CD4-positive, alpha-beta memory T cell (primary cell): ENCODE measurements at regions of chr2 and their contacts with region 1.

Region 1: DNA sequence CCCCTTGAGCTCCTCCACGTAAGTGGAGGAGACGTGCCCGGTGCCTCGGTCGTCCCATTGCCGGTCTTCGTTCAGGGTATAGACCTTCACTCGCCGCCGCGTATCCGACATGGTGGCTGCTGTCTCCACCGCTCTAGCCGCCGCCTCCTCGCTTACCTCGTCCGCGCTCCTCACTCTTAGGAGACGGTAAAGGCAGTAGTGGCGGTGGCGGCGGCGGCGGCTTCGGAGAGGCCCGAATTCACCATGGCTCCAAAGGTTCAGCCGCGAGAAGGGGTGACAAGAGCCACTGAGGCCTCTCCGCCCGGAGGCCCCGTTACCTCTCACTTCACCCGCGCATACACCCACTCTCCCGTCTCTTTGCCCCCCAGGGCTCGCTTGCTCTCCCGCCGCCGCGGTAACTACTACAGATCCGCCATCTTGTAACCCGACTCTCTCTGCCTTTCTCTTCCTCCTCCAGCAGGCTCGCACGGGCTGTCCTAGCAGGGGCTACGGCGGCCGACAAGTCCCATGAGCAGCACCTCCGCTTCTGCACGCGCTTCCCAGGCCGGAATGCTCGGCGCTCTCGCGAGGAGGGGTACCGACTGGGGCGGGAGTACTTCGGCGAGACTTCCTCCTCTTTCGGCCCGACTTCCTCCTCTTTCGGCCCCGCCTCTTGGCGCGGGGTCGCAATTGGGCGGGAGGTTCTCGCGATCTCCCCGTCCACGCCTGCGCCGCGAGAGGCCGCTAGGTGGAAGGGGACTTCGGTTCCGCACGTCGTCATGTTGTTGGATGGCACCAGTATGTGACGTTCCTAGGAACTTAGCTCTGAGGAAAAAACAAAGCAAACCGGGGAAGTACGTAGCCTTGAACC is at the start of gene PPP4R3B:
- DNase-seq: peak; percentile 99 to 100 (median 100)
- H3K4me3 ChIP-seq: peak within 1 kb of the TSS; percentile 97 to 98
- H3K4me3 Mint-ChIP-seq: no peak within 1 kb of the TSS
- H3K27ac ChIP-seq: peak within 1 kb of the TSS; percentile 100
- H3K27ac Mint-ChIP-seq: no peak within 1 kb of the TSS
- H3K4me1 ChIP-seq: peaks cover 64% of the 10 kb centered on the region
- H3K4me1 Mint-ChIP-seq: peaks cover 23 to 44% (median 40%) of the 10 kb centered on the region in 4 donors
- H3K27me3 ChIP-seq: no peaks in the 10 kb centered on the region
- H3K27me3 Mint-ChIP-seq: no peaks in the 10 kb centered on the region
- total RNA-seq, gene PPP4R3B: 111 to 114 TPM

Region 2: DNA sequence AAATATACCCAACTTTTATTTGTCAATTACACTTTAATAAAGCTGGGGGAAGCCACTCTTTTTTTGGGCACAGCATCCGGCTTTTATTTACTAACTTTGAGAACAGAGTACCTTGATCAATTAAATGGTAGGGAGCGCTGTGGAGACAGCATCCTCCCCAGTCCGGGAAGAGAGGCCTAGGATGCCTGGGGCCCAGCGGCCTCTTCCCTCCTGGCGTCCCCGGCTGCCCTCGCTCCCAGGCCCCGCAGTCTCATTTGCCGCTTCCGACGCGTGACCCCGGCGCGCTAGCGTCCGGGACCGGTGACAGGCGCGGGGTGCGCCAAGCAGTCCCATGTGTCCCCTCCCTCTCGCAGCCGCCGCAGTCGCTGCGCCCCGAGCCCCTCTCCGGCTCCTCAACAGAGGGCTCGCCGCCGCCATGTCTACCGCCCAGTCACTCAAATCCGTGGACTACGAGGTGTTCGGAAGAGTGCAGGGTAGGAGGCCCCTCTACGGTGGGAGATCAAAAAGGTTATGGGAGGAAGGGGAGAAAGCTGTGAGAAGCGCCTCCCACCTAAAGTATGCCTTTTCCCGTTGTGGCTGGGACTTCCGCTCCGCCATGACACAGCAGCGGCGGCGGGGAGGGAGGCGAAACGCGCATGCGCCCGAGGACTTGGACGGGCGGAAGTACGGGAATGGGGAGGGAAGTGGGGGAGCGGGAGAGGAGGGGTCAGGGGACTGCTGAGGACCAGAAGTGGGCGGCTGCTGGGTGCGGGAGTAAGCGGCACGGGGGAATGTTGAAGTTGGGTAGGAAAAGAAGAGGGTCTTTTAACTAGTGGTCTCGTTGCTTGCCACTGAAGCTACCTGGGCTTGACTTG is 1501.9 kb before region 1 on chr2 and contains the start of gene ACYP2:
- CTCF ChIA-PET with region 1: no interaction called
- POLR2A ChIA-PET with region 1: no interaction called
- intact Hi-C with region 1: loop called (anchors 1 kb)
- DNase-seq: peak; percentile 89 to 92 (median 89)
- H3K4me3 ChIP-seq: peak within 1 kb of the TSS; percentile 77 to 83
- H3K4me3 Mint-ChIP-seq: peak within 1 kb of the TSS; percentile 94 to 99 (median 97)
- H3K27ac ChIP-seq: peak within 1 kb of the TSS; percentile 93
- H3K27ac Mint-ChIP-seq: peak within 1 kb of the TSS; percentile 99 to 100 (median 99)
- H3K4me1 ChIP-seq: peaks cover 17% of the 10 kb centered on the region
- H3K4me1 Mint-ChIP-seq: peaks cover 12 to 27% (median 16%) of the 10 kb centered on the region in 4 donors
- H3K27me3 ChIP-seq: no peaks in the 10 kb centered on the region
- H3K27me3 Mint-ChIP-seq: no peaks in the 10 kb centered on the region
- total RNA-seq, gene ACYP2: 13.1 to 16.9 TPM

Region 3: DNA sequence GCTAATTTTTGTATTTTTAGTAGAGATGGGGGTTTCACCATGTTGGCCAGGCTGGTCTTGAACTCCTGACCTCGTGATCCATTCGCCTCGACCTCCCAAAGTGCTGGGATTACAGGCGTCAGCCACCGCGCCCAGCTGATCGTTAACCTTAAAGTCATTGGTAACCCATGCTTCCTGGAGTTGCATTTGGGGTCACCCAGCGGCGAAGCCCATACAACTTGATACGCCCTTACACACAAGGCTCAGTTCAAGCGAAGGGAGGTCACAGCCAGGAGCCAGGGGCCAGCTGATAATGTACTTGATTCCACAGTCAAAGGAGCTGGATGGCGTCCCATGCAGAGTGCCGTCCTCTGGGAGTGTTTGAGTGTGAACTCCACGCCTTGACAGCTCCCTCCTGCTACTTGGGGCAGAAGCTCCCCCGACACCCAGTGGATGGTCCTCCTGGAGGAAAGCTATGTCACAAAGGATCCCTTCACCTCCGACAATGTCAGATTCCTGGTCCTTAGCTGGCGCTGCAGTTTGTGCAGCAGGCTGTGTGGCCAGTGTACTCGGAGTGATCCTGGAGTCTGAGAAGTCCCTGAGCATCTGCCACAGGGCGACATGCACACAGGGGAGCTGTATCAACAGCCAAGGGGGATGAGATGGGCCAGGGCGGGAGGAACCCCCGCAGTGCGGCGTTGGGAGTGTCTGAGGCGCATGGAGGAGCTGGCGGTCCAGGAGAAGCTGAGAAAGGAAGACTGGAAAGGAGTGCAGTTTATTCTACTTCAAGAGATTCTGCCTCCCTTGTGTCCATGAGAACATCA is 393.2 kb before region 1 on chr2:
- CTCF ChIA-PET with region 1: no interaction called
- POLR2A ChIA-PET with region 1: interaction called, 13 read pairs
- intact Hi-C with region 1: no loop called
- DNase-seq: peak in 2 of 5 donors; percentile 21 to 39
- H3K4me3 ChIP-seq: no peak overlapping the region
- H3K4me3 Mint-ChIP-seq: peak overlapping the region; percentile 79 to 90 (median 86)
- H3K27ac ChIP-seq: peak overlapping the region; percentile 84
- H3K27ac Mint-ChIP-seq: peak overlapping the region; percentile 85 to 95 (median 93)
- H3K4me1 ChIP-seq: peaks cover 40% of the 10 kb centered on the region
- H3K4me1 Mint-ChIP-seq: peaks cover 32 to 55% (median 41%) of the 10 kb centered on the region in 4 donors
- H3K27me3 ChIP-seq: no peaks in the 10 kb centered on the region
- H3K27me3 Mint-ChIP-seq: no peaks in the 10 kb centered on the region

Region 4: GRCh38 chr2:55282110-55282917 is 335.1 kb before region 1 on chr2:
- CTCF ChIA-PET with region 1: no interaction called
- POLR2A ChIA-PET with region 1: interaction called, 4 read pairs
- intact Hi-C with region 1: loop called (anchors 5 kb)
- DNase-seq: peak; percentile 86 to 87 (median 86)
- H3K4me3 ChIP-seq: peak overlapping the region; percentile 26 to 90
- H3K4me3 Mint-ChIP-seq: peak overlapping the region; percentile 92 to 96 (median 94)
- H3K27ac ChIP-seq: peak overlapping the region; percentile 62
- H3K27ac Mint-ChIP-seq: peak overlapping the region; percentile 93 to 99 (median 98)
- H3K4me1 ChIP-seq: peaks cover 18% of the 10 kb centered on the region
- H3K4me1 Mint-ChIP-seq: peaks cover 13 to 38% (median 26%) of the 10 kb centered on the region in 4 donors
- H3K27me3 ChIP-seq: no peaks in the 10 kb centered on the region
- H3K27me3 Mint-ChIP-seq: no peaks in the 10 kb centered on the region

Region 5: DNA sequence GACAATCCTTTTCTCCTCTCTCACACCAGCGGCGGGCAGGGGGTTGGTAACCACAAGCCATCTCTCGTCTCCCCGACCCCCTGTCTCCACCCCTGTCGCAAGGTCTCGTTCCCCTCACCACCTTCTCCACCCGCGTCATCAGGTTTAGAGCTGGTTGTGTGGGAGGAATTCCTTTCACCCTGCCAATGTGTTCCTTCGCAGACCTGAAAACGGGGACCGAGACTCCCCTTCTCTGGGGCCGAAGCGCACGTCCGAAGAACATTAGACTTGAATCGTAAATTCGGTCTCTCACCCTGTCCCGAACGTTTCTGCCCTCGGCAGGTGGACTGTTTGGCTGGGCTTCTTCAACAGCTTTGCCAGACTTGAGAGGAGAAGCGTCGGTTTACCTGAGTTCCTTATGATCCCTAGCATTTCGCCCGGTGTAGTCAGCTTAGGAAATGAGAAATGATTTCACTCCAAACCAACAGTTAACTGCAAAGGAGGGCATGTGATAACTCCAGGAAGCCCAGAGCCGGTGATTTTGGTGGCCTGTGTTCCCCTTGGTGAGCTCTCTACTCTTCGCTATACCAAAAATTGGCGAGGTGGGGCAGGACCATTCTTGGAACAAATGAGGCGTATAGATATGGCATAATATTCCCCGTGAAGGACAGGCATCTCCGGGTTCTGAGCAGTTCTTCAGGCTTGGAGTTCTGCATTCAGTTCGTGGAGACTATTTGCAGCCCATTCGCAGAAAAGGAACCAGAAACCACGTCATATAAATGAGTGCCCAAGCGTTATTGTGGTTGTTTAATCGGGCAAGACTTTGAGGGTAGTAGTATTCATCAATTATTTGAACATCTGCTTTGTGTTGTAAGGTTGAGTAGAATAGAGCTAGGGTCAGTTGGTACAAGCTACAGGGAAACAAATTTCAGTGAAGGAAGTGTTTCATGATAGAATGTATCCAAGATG is 97.2 kb before region 1 on chr2:
- CTCF ChIA-PET with region 1: interaction called, 6 read pairs
- POLR2A ChIA-PET with region 1: interaction called, 90 read pairs
- intact Hi-C with region 1: loop called (anchors 1 kb)
- DNase-seq: peak in 2 of 5 donors; percentile 30 to 67
- H3K4me3 ChIP-seq: peak overlapping the region; percentile 69 to 84
- H3K4me3 Mint-ChIP-seq: peak overlapping the region; percentile 95 to 100 (median 98)
- H3K27ac ChIP-seq: peak overlapping the region; percentile 83
- H3K27ac Mint-ChIP-seq: peak overlapping the region; percentile 98 to 100 (median 99)
- H3K4me1 ChIP-seq: peaks cover 22% of the 10 kb centered on the region
- H3K4me1 Mint-ChIP-seq: peaks cover 11 to 23% (median 19%) of the 10 kb centered on the region in 4 donors
- H3K27me3 ChIP-seq: no peaks in the 10 kb centered on the region
- H3K27me3 Mint-ChIP-seq: no peaks in the 10 kb centered on the region

Region 6: GRCh38 chr2:55601849-55602248 is 15.6 kb before region 1 on chr2:
- CTCF ChIA-PET with region 1: no interaction called
- POLR2A ChIA-PET with region 1: interaction called, 6 read pairs
- intact Hi-C with region 1: loop called (anchors 2 kb)
- DNase-seq: no peak
- H3K4me3 ChIP-seq: no peak overlapping the region
- H3K4me3 Mint-ChIP-seq: peak overlapping the region in 2 of 8 donors; percentile 4 to 48
- H3K27ac ChIP-seq: no peak overlapping the region
- H3K27ac Mint-ChIP-seq: peak overlapping the region in 6 of 7 donors; percentile 6 to 83 (median 58)
- H3K4me1 ChIP-seq: peaks cover 32% of the 10 kb centered on the region
- H3K4me1 Mint-ChIP-seq: peaks cover 30 to 55% (median 46%) of the 10 kb centered on the region in 4 donors
- H3K27me3 ChIP-seq: no peaks in the 10 kb centered on the region
- H3K27me3 Mint-ChIP-seq: no peaks in the 10 kb centered on the region